ENCODE measurements at regions of chr4 and their contacts with region 1.

Region 1: GRCh38 chr4:151099229-151099975 is at the start of gene RPS3A:
- DNase-seq: peak; percentile 97
- H3K4me3 Mint-ChIP-seq: peak within 1 kb of the TSS; percentile 96
- H3K27ac Mint-ChIP-seq: peak within 1 kb of the TSS; percentile 100
- H3K4me1 Mint-ChIP-seq: peaks cover 37% of the 10 kb centered on the region
- H3K27me3 Mint-ChIP-seq: peaks cover 4% of the 10 kb centered on the region
- total RNA-seq, gene RPS3A: 3,793 to 3,917 TPM

Region 2: DNA sequence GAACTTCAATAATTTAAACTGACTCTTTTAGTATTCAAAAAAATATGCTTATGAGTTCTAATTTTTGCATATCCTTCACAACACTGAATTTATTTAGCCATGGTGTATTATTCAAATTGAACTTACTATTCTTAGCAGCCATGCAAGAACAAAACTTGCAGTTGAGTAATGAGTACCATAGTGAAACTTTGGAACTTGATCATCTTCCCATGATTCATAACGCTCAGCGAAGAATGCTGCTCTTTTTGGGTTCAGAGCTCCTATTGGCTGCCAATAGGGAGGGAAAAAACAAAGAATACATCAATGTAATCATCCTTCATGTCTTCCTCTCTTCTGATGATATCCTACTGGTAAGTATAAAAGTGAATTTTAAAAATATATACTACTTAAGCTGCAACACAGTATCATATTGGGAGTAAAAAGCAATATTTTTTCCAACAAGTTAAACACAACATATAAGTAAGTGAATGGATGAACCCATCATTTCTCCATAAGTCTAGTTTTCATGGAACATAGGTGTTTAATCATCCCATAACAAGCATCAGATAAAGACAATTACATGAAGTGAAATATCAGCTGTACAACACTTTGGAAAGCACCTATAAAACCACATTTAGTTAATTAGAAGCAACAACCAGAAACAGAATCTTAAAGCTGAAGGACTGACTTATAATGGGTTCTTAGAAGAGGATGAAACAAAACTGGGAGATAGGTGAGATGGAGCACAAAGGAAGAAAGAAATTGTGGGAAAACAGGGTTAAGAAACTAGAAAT is 662.6 kb before region 1 on chr4:
- CTCF ChIA-PET with region 1: no interaction called
- intact Hi-C with region 1: loop called (anchors 1 kb)
- DNase-seq: peak; percentile 42
- H3K4me3 Mint-ChIP-seq: no peak overlapping the region
- H3K27ac Mint-ChIP-seq: peak overlapping the region; percentile 66
- H3K4me1 Mint-ChIP-seq: peaks cover 15% of the 10 kb centered on the region
- H3K27me3 Mint-ChIP-seq: no peaks in the 10 kb centered on the region

Region 3: DNA sequence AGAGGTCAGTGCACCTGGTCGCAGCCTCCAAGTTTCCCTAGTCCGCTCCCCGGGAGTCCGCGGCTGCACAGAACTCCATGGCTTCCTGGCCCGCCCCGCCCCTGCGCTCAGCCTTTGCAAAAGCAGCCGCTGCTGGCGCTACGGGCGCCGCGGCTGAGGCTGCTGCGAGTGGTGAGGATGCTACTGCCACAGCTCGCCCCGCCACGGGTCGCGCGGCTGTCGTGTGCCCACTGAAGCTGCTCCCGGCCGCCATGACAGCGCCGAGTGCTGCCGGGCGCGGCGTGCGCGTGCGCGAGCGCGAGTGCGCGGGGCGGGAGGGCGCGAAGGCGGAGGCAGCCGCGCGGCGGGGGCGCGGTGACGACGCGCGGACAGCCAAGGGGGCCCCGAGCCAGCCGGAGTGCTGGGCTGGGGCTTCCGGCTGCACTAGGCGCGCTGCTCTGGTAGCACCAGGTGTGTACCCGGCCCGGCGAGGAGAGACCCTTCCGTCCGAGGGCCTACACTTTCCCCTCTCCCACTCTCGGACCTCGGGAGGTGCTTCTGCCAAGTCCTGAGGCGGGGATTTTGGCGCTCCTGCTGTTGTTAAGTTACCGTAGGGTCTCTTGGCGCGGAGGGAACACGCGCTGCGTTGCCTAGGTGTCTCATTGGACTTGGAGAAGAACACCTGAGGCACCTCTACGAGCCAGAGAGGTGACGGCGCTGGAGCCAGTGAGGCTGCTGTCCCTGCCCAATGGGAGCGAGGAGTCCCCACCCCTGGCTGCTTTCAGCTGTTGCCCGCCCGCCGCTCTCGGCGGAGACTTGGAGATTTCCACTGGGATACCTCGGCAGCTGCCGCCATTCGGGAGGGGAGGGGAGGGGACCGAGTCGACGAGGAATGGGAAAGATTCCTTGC is 83.7 kb before region 1 on chr4:
- CTCF ChIA-PET with region 1: no interaction called
- intact Hi-C with region 1: loop called (anchors 1 kb)
- DNase-seq: peak; percentile 71
- H3K4me3 Mint-ChIP-seq: peak overlapping the region; percentile 100
- H3K27ac Mint-ChIP-seq: peak overlapping the region; percentile 99
- H3K4me1 Mint-ChIP-seq: peaks cover 23% of the 10 kb centered on the region
- H3K27me3 Mint-ChIP-seq: no peaks in the 10 kb centered on the region

Region 4: GRCh38 chr4:151055539-151055938 is 43.9 kb before region 1 on chr4:
- CTCF ChIA-PET with region 1: no interaction called
- intact Hi-C with region 1: no loop called
- DNase-seq: no peak
- H3K4me3 Mint-ChIP-seq: no peak overlapping the region
- H3K27ac Mint-ChIP-seq: no peak overlapping the region
- H3K4me1 Mint-ChIP-seq: no peaks in the 10 kb centered on the region
- H3K27me3 Mint-ChIP-seq: no peaks in the 10 kb centered on the region

Region 5: GRCh38 chr4:151408630-151409469 is 309.4 kb after region 1 on chr4 and contains the start of gene FHIP1A:
- CTCF ChIA-PET with region 1: no interaction called
- intact Hi-C with region 1: loop called (anchors 1 kb)
- DNase-seq: peak; percentile 89
- H3K4me3 Mint-ChIP-seq: peak within 1 kb of the TSS; percentile 88
- H3K27ac Mint-ChIP-seq: peak within 1 kb of the TSS; percentile 60
- H3K4me1 Mint-ChIP-seq: peaks cover 22% of the 10 kb centered on the region
- H3K27me3 Mint-ChIP-seq: peaks cover 17% of the 10 kb centered on the region
- total RNA-seq, gene FHIP1A: 0.07 to 0.17 TPM

Region 6: DNA sequence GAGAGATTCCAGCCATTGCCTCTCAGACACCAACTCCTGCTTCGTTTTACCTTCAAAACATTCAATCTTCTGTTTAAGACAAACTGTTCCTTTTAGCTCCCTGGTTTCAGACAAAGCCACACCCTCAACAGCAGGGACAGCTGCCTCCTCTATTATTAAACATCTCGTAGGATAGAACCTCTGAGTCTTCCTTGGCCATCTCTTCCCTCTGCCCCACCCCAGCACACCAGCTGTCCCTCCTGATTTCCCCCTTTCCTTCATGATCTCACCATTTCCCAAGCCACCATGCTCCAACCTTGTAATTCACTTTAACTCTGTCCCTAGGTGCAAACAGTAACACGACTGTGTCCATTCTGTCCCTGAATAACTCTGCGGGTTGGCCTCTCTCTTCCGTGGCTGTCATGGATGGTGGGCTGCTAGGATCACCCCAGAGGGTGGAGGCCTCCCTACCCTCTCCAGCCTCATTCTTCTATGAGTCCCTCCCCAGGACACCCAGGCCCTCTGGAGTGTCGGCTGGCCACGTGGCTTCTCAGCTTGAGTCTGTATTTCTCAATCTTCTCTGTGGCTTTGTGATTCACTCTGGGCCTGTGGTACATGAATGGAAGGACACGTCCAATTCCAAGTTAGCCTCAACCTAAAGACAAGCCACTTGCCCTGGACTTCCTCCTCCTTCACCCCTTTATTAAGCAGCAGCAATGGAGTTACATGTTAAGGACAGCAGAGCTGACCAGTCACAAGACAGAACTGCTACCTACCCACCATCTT is 1086.6 kb after region 1 on chr4:
- CTCF ChIA-PET with region 1: no interaction called
- intact Hi-C with region 1: loop called (anchors 5 kb)
- DNase-seq: no peak
- H3K4me3 Mint-ChIP-seq: no peak overlapping the region
- H3K27ac Mint-ChIP-seq: no peak overlapping the region
- H3K4me1 Mint-ChIP-seq: peaks cover 38% of the 10 kb centered on the region
- H3K27me3 Mint-ChIP-seq: no peaks in the 10 kb centered on the region